CD4-positive, alpha-beta memory T cell (primary cell): ENCODE measurements at regions of chr14 and their contacts with region 1.

Region 1: DNA sequence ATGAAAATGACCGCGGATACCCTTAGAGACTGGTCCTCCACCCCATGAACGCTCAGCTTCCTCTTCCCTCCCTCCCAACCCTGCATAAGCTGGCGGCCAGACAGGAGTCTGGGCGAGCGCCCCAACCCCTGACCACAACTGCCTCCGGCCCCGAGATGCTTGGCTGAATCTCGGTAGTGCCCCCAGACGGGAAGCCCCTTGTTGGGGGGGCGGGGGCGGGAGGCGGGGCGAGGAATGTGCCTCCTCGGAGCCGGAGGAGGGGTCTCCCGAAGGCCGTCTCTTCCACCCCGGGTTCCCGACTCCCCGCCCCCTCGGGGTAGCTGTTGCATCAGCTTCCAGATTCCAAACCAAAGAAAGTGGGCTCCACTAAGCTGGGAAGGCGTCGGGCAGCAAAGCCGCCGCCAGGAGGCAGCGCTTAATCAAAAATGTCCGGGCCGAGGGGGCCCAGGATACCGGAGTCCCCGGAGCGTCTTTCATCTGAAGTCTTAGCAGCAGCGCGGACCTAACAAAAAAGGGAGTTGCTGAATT is 7.1 kb upstream of the MRPL52 start:
- DNase-seq: peak; percentile 63 to 70 (median 66)
- H3K4me3 ChIP-seq: peak overlapping the region in 1 of 2 donors; percentile 27
- H3K4me3 Mint-ChIP-seq: peak overlapping the region; percentile 20 to 77 (median 66)
- H3K27ac ChIP-seq: no peak overlapping the region
- H3K27ac Mint-ChIP-seq: peak overlapping the region in 2 of 7 donors; percentile 19 to 43
- H3K4me1 ChIP-seq: peaks cover 7% of the 10 kb centered on the region
- H3K4me1 Mint-ChIP-seq: peaks cover 6 to 22% (median 12%) of the 10 kb centered on the region in 4 donors
- H3K27me3 ChIP-seq: no peaks in the 10 kb centered on the region
- H3K27me3 Mint-ChIP-seq: peaks cover 6 to 16% of the 10 kb centered on the region in 2 donors

Region 2: DNA sequence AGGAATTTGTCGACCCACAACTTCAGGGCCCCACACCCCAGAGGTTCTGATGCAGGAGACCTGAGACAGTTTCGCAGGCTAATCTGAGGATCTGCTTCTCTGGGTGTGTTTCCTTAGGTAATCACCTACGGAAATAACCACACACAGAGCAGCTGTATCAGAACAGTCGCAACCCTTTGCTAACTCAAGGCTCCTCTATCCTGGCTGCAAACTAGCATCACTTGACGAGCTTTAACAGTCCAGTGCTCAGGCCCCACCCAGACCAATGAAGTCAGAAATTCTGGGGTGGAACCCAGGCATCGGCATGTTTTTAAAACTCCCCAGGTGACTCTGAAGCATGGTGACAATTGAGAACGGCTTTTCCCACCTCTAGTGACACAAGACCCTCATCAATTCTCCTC is 28.1 kb before region 1 on chr14:
- CTCF ChIA-PET with region 1: no interaction called
- POLR2A ChIA-PET with region 1: no interaction called
- intact Hi-C with region 1: no loop called
- DNase-seq: no peak
- H3K4me3 ChIP-seq: no peak overlapping the region
- H3K4me3 Mint-ChIP-seq: no peak overlapping the region
- H3K27ac ChIP-seq: no peak overlapping the region
- H3K27ac Mint-ChIP-seq: no peak overlapping the region
- H3K4me1 ChIP-seq: no peaks in the 10 kb centered on the region
- H3K4me1 Mint-ChIP-seq: peaks cover 0 to 2% (median 0%) of the 10 kb centered on the region in 4 donors
- H3K27me3 ChIP-seq: no peaks in the 10 kb centered on the region
- H3K27me3 Mint-ChIP-seq: peaks cover 28 to 29% of the 10 kb centered on the region in 2 donors

Region 3: GRCh38 chr14:22811722-22812121 is 10.9 kb before region 1 on chr14:
- CTCF ChIA-PET with region 1: interaction called, 13 read pairs
- POLR2A ChIA-PET with region 1: no interaction called
- intact Hi-C with region 1: no loop called
- DNase-seq: no peak
- H3K4me3 ChIP-seq: no peak overlapping the region
- H3K4me3 Mint-ChIP-seq: no peak overlapping the region
- H3K27ac ChIP-seq: no peak overlapping the region
- H3K27ac Mint-ChIP-seq: no peak overlapping the region
- H3K4me1 ChIP-seq: no peaks in the 10 kb centered on the region
- H3K4me1 Mint-ChIP-seq: peaks cover 0 to 12% (median 3%) of the 10 kb centered on the region in 4 donors
- H3K27me3 ChIP-seq: no peaks in the 10 kb centered on the region
- H3K27me3 Mint-ChIP-seq: peaks cover 1 to 3% of the 10 kb centered on the region in 2 donors

Region 4: GRCh38 chr14:22836301-22837113 is 13.9 kb after region 1 on chr14 and contains the start of gene MMP14:
- CTCF ChIA-PET with region 1: interaction called, 23 read pairs
- POLR2A ChIA-PET with region 1: interaction called, 3 read pairs
- intact Hi-C with region 1: no loop called
- DNase-seq: no peak
- H3K4me3 ChIP-seq: no peak within 1 kb of the TSS
- H3K4me3 Mint-ChIP-seq: peak within 1 kb of the TSS; percentile 74 to 86 (median 80)
- H3K27ac ChIP-seq: no peak within 1 kb of the TSS
- H3K27ac Mint-ChIP-seq: peak within 1 kb of the TSS in 4 of 7 donors; percentile 71 to 92 (median 78)
- H3K4me1 ChIP-seq: peaks cover 11% of the 10 kb centered on the region
- H3K4me1 Mint-ChIP-seq: peaks cover 4 to 18% (median 12%) of the 10 kb centered on the region in 4 donors
- H3K27me3 ChIP-seq: peaks cover 13% of the 10 kb centered on the region
- H3K27me3 Mint-ChIP-seq: peaks cover 8 to 22% of the 10 kb centered on the region in 2 donors
- total RNA-seq, gene MMP14: 3.0 to 3.8 TPM

Region 5: GRCh38 chr14:22886500-22887259 is 64.0 kb after region 1 on chr14:
- CTCF ChIA-PET with region 1: interaction called, 16 read pairs
- POLR2A ChIA-PET with region 1: interaction called, 3 read pairs
- intact Hi-C with region 1: no loop called
- DNase-seq: peak; percentile 73 to 85 (median 78)
- H3K4me3 ChIP-seq: peak overlapping the region; percentile 24 to 30
- H3K4me3 Mint-ChIP-seq: peak overlapping the region; percentile 87 to 97 (median 94)
- H3K27ac ChIP-seq: peak overlapping the region; percentile 68
- H3K27ac Mint-ChIP-seq: peak overlapping the region; percentile 93 to 99 (median 97)
- H3K4me1 ChIP-seq: peaks cover 57% of the 10 kb centered on the region
- H3K4me1 Mint-ChIP-seq: peaks cover 34 to 85% (median 59%) of the 10 kb centered on the region in 4 donors
- H3K27me3 ChIP-seq: no peaks in the 10 kb centered on the region
- H3K27me3 Mint-ChIP-seq: no peaks in the 10 kb centered on the region

Region 6: DNA sequence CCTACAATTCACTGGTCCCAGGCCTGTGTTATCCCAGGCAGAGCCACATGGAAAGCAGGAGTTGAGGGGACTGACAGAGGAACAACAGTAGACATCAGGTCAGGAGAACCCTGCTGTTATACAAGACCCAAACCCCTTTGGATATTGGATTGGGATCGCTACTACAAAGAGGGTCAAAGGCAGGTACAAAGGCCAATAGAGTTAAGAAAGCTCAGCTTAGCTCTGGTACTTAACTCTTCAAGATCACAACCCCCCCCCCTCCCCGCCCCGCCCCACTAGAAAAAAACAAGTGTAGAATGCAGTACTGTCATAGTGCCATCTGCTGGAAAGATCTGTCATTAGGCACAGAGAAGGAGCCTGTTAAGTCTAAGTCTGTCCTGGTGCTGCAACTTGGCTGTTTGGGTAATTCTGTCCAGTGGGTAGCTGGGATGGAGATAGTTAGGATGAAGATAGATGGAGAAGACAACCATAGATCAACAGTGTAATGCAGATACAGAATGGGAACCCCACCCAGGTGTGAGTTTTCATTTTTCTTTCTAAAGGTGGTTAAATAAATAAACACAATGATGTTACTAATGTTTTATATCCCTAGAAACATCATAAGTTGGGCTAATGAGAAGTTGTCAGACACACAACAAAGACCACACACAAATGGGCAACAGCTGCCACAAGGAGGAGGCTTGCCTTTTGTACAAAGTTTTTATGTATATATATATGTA is 77.6 kb after region 1 on chr14:
- CTCF ChIA-PET with region 1: interaction called, 119 read pairs
- POLR2A ChIA-PET with region 1: interaction called, 7 read pairs
- intact Hi-C with region 1: loop called (anchors 1 kb)
- DNase-seq: peak; percentile 66 to 72 (median 67)
- H3K4me3 ChIP-seq: no peak overlapping the region
- H3K4me3 Mint-ChIP-seq: no peak overlapping the region
- H3K27ac ChIP-seq: no peak overlapping the region
- H3K27ac Mint-ChIP-seq: peak overlapping the region; percentile 12 to 65 (median 54)
- H3K4me1 ChIP-seq: peaks cover 4% of the 10 kb centered on the region
- H3K4me1 Mint-ChIP-seq: peaks cover 5 to 15% (median 5%) of the 10 kb centered on the region in 4 donors
- H3K27me3 ChIP-seq: no peaks in the 10 kb centered on the region
- H3K27me3 Mint-ChIP-seq: no peaks in the 10 kb centered on the region

Region 7: GRCh38 chr14:22994762-22995275 is 172.2 kb after region 1 on chr14:
- CTCF ChIA-PET with region 1: no interaction called
- POLR2A ChIA-PET with region 1: no interaction called
- intact Hi-C with region 1: no loop called
- DNase-seq: peak in 1 of 5 donors; percentile 29
- H3K4me3 ChIP-seq: no peak overlapping the region
- H3K4me3 Mint-ChIP-seq: no peak overlapping the region
- H3K27ac ChIP-seq: no peak overlapping the region
- H3K27ac Mint-ChIP-seq: peak overlapping the region in 2 of 7 donors; percentile 57 to 61
- H3K4me1 ChIP-seq: no peaks in the 10 kb centered on the region
- H3K4me1 Mint-ChIP-seq: no peaks in the 10 kb centered on the region
- H3K27me3 ChIP-seq: no peaks in the 10 kb centered on the region
- H3K27me3 Mint-ChIP-seq: no peaks in the 10 kb centered on the region

Region 8: GRCh38 chr14:23209651-23210423 is 387.2 kb after region 1 on chr14:
- CTCF ChIA-PET with region 1: no interaction called
- POLR2A ChIA-PET with region 1: no interaction called
- intact Hi-C with region 1: no loop called
- DNase-seq: no peak
- H3K4me3 ChIP-seq: no peak overlapping the region
- H3K4me3 Mint-ChIP-seq: no peak overlapping the region
- H3K27ac ChIP-seq: no peak overlapping the region
- H3K27ac Mint-ChIP-seq: no peak overlapping the region
- H3K4me1 ChIP-seq: no peaks in the 10 kb centered on the region
- H3K4me1 Mint-ChIP-seq: no peaks in the 10 kb centered on the region
- H3K27me3 ChIP-seq: no peaks in the 10 kb centered on the region
- H3K27me3 Mint-ChIP-seq: peaks cover 13 to 32% of the 10 kb centered on the region in 2 donors